Naive thymus-derived CD4-positive, alpha-beta T cell (primary cell): ENCODE measurements at regions of chr20 and their contacts with region 1.

Region 1: GRCh38 chr20:62025832-62026563 is 39.7 kb downstream of the TAF4 start:
- DNase-seq: peak in 7 of 9 donors; percentile 39 to 58 (median 50)
- ATAC-seq: peak; percentile 75
- H3K4me3 ChIP-seq: no peak overlapping the region
- H3K4me3 Mint-ChIP-seq: peak overlapping the region in 6 of 10 donors; percentile 5 to 56 (median 26)
- H3K27ac ChIP-seq: no peak overlapping the region
- H3K27ac Mint-ChIP-seq: peak overlapping the region in 8 of 9 donors; percentile 2 to 79 (median 44)
- H3K4me1 ChIP-seq: peaks cover 5 to 21% of the 10 kb centered on the region in 2 donors
- H3K4me1 Mint-ChIP-seq: peaks cover 25 to 73% (median 55%) of the 10 kb centered on the region in 7 donors
- H3K27me3 ChIP-seq: no peaks in the 10 kb centered on the region
- H3K27me3 Mint-ChIP-seq: no peaks in the 10 kb centered on the region

Region 2: GRCh38 chr20:62136283-62137091 is 110.5 kb after region 1 on chr20:
- CTCF ChIA-PET with region 1: interaction called, 18 read pairs
- POLR2A ChIA-PET with region 1: interaction called, 5 read pairs
- intact Hi-C with region 1: loop called (anchors 1 to 5 kb)
- DNase-seq: peak; percentile 54 to 81 (median 75)
- ATAC-seq: peak; percentile 81
- H3K4me3 ChIP-seq: no peak overlapping the region
- H3K4me3 Mint-ChIP-seq: peak overlapping the region in 1 of 10 donors; percentile 20
- H3K27ac ChIP-seq: peak overlapping the region; percentile 18
- H3K27ac Mint-ChIP-seq: peak overlapping the region; percentile 60 to 94 (median 87)
- H3K4me1 ChIP-seq: peaks cover 10 to 15% of the 10 kb centered on the region in 2 donors
- H3K4me1 Mint-ChIP-seq: peaks cover 33 to 55% (median 45%) of the 10 kb centered on the region in 7 donors
- H3K27me3 ChIP-seq: no peaks in the 10 kb centered on the region
- H3K27me3 Mint-ChIP-seq: no peaks in the 10 kb centered on the region

Region 3: GRCh38 chr20:62143118-62143973 is 117.3 kb after region 1 on chr20 and contains the starts of genes PSMA7 and SS18L1:
- CTCF ChIA-PET with region 1: interaction called, 6 read pairs
- POLR2A ChIA-PET with region 1: interaction called, 5 read pairs
- intact Hi-C with region 1: loop called (anchors 1 to 5 kb)
- DNase-seq: peak; percentile 79 to 90 (median 87)
- ATAC-seq: peak; percentile 91
- H3K4me3 ChIP-seq: peak within 1 kb of the TSS; percentile 65
- H3K4me3 Mint-ChIP-seq: peak within 1 kb of the TSS; percentile 89 to 98 (median 92)
- H3K27ac ChIP-seq: peak within 1 kb of the TSS; percentile 75
- H3K27ac Mint-ChIP-seq: peak within 1 kb of the TSS; percentile 80 to 97 (median 93)
- H3K4me1 ChIP-seq: peaks cover 28 to 36% of the 10 kb centered on the region in 2 donors
- H3K4me1 Mint-ChIP-seq: peaks cover 36 to 64% (median 55%) of the 10 kb centered on the region in 7 donors
- H3K27me3 ChIP-seq: no peaks in the 10 kb centered on the region
- H3K27me3 Mint-ChIP-seq: no peaks in the 10 kb centered on the region
- total RNA-seq, gene PSMA7: 125 to 301 (median 165) TPM
- total RNA-seq, gene SS18L1: 17.8 to 26.7 (median 22.6) TPM

Region 4: DNA sequence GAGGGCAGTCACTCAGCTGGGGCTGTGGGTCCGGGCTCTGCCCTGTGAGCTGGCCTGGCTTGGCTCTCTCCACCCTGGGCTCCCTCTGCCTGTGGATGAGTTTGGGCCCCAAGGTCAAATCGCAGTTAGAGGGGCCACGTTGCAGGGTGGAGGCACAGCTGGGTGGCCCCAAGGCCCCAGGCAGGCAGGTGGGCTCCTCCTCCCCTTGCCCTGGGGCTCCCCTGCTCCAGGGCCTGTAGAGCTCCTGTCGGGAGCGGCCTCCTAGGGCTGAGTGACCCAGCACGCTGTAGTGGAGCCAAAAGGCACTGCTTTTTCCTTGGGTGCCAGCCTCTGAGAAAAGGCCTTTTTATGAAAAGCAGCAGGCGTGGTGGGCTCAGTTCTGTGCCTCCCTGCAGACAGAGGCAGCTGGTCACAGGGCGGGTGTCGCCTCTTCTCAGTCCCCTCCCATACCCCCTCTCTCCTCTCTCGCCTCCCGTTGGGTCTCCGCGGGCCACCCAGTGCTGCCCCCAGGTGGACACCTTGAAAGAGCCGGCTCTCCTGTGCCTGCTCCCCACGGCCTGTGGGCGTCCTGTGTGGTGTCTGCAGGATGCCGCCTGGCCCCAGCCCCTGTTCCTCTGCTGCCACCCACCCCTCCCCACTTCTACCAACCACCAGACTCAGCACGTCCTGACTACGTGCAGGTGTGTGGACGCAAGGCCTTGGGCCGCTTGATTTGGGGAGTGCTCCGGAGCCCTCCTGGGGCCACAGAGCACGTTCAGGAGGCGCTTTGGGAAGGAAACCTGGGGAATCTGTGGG is 130.8 kb after region 1 on chr20:
- CTCF ChIA-PET with region 1: interaction called, 4 read pairs
- POLR2A ChIA-PET with region 1: no interaction called
- intact Hi-C with region 1: loop called in 1 of 2 experiments (anchors 1 kb)
- DNase-seq: peak; percentile 56 to 75 (median 69)
- ATAC-seq: peak; percentile 93
- H3K4me3 ChIP-seq: no peak overlapping the region
- H3K4me3 Mint-ChIP-seq: peak overlapping the region in 1 of 10 donors; percentile 45
- H3K27ac ChIP-seq: no peak overlapping the region
- H3K27ac Mint-ChIP-seq: no peak overlapping the region
- H3K4me1 ChIP-seq: peaks cover 0 to 3% of the 10 kb centered on the region in 2 donors
- H3K4me1 Mint-ChIP-seq: peaks cover 7 to 30% (median 19%) of the 10 kb centered on the region in 7 donors
- H3K27me3 ChIP-seq: no peaks in the 10 kb centered on the region
- H3K27me3 Mint-ChIP-seq: no peaks in the 10 kb centered on the region

Region 5: DNA sequence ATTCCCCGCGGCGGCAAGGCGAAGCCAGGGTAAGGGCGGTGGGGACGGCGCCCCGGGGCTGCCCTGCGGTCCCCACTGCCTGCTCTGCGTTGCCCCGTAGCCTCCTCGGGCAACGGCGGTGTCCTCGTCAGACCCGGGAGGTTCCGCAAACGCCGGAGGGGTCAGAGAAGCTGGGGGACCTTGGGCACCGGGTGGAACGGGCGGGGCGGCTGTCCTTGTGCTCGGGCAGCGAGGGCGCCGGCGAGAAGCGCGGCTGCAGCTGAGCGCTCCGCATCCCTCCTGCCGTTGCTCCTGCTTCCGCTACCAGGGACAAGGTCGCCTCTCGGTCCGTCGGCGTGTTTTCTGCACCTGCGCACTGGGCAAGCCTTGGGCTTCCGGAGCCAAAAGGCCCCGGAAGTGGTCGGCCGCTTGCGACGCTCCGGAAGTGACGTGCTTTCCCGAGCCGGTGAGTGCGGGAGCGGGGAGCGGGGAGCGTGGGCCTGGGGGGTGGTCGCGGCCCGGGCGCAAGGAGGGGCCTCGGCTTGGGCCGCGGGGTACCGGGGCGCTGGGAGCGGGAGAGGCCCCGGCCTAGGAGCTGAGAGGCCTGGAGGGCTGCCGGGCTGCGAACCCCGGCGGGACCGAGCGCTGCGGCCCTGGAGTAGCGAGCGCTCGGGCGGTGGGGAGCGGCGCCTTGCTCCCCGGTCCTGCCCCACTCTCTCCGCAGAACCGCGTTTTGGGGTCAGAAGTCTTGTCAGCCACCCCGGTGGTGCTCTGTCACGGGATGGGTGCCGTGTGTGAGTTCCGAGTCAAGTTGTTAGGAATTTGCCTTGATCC is 156.8 kb after region 1 on chr20 and contains the start of gene MTG2:
- CTCF ChIA-PET with region 1: no interaction called
- POLR2A ChIA-PET with region 1: interaction called, 4 read pairs
- intact Hi-C with region 1: loop called in 1 of 2 experiments (anchors 1 kb)
- DNase-seq: peak; percentile 81 to 94 (median 93)
- ATAC-seq: peak; percentile 95
- H3K4me3 ChIP-seq: peak within 1 kb of the TSS; percentile 87
- H3K4me3 Mint-ChIP-seq: peak within 1 kb of the TSS; percentile 84 to 95 (median 90)
- H3K27ac ChIP-seq: peak within 1 kb of the TSS; percentile 92
- H3K27ac Mint-ChIP-seq: peak within 1 kb of the TSS; percentile 90 to 97 (median 95)
- H3K4me1 ChIP-seq: peaks cover 9 to 16% of the 10 kb centered on the region in 2 donors
- H3K4me1 Mint-ChIP-seq: peaks cover 15 to 55% (median 42%) of the 10 kb centered on the region in 7 donors
- H3K27me3 ChIP-seq: no peaks in the 10 kb centered on the region
- H3K27me3 Mint-ChIP-seq: no peaks in the 10 kb centered on the region
- total RNA-seq, gene MTG2: 20.4 to 51.5 (median 41.8) TPM